GM12878 (cell line): ENCODE measurements at regions of chr2 and their contacts with region 1.

Region 1: DNA sequence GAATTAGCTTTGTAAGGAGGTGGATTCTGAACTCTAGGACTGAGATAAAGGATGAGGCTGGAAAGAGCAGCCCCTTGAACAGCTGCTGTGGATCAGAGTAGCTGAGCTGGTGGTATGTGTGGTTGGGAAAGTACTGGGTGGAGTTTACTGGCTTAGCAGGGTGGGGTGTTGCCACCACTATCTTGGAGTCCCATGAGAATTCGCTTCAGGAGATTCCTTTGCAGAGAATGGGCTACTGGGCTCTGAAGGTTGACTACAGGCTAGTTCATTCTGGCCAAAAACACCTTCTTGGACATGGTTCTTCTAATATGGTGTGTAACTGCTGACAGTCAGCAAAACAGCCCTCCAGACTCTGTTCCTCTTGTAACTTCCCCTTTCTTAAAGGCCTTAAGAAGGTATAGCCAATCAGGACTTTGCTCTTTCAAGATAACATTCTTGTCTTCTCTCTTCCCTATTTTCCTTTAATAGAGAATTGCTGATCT is 52.7 kb downstream of the TET3 start:
- DNase-seq: peak; percentile 54
- ATAC-seq: peak; percentile 81
- H3K4me3 ChIP-seq: peak overlapping the region; percentile 35; the same call in 1 of the 2 replicates
- H3K27ac ChIP-seq: peak overlapping the region; percentile 64
- H3K4me1 ChIP-seq: peaks cover 69% of the 10 kb centered on the region
- H3K27me3 ChIP-seq: no peaks in the 10 kb centered on the region
- CTCF ChIP-seq: no peak
- EP300 ChIP-seq: 0 out of 4 replicates have a peak, but pooled peaks of 1 of the 2 experiments have one; percentile 7
- POLR2A ChIP-seq: no peak
- RAD21 ChIP-seq: no peak

Region 2: DNA sequence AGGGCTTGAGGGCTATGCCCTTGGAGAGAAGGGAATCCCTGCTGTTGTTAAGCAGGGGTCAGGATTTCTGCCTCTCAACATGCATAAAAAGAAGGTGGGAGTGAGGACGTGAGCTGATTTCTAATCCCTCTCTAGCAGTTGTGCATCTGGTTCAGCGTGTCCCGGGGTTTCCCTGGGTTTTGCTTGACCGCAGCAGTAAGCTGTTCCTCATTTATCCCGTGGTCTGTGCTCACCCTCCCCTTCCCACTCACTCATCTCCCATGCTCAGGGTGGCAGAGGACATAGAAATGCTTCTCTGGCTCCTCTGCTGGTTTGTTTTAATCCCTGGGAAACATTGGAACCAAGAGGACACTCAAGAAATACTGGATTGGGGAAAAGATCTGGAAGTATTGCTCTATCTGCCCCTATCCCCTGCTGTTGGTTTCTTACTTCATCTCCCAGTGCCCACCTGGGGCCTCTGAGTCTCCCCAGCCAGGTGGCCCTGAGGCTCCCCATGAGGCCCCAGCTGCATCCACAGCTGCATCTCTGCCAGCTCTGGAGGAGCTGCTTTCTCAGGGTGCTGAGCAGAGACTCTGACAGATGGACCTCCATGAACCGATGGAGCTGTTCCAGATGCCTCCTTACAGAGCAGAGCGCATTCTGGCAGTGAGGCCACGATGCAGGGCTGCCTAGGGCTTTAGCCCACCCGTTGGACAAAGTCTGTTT is 16.6 kb before region 1 on chr2:
- CTCF ChIA-PET with region 1: interaction called, 31 read pairs
- POLR2A ChIA-PET with region 1: interaction called, 68 read pairs
- RAD21 ChIA-PET with region 1: interaction called, 20 read pairs
- SMC1A ChIA-PET with region 1: interaction called, 94 read pairs
- in situ Hi-C with region 1: no loop called
- intact Hi-C with region 1: no loop called
- DNase-seq: no peak
- ATAC-seq: peak; percentile 67
- H3K4me3 ChIP-seq: no peak overlapping the region
- H3K27ac ChIP-seq: peak overlapping the region; percentile 76
- H3K4me1 ChIP-seq: peaks cover 32% of the 10 kb centered on the region
- H3K27me3 ChIP-seq: no peaks in the 10 kb centered on the region
- CTCF ChIP-seq: 0 out of 6 replicates have a peak, but pooled peaks of 1 of the 3 experiments have one; percentile 0
- EP300 ChIP-seq: peak in 1 of 2 experiments; percentile 32; a peak in 1 of 4 replicates
- POLR2A ChIP-seq: no peak
- RAD21 ChIP-seq: no peak

Region 3: DNA sequence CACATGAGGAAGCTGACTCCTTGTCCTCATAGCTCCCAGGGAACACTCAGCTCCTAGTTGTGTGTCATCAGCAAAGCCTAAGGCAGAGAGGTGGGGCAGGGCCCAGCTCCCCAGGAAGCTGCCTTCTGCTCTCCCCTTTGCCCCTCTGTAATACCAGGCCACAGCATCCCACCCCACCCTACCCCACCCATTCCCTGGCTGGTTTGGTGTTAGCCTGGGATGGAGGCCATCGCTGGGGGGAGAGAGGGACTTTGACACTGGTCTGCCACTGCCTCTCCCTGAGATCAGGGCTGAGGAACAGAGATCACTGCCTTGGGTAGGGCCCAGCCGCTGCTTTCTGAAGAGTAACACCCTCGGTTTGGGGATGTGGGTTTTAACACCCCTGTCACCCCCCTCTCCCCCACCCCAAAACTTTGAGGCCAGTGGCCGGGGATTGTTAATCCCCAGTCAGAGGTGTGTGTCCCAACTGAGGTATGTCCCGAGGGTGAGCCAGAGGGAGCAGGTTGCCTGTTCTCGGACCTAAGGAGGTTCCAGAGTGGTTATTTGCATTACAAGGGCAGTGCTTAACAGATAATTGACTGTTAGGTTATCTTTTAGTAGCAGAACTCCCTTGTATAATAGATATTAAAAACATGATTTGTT is 11.3 kb before region 1 on chr2:
- CTCF ChIA-PET with region 1: interaction called, 31 read pairs
- POLR2A ChIA-PET with region 1: interaction called, 68 read pairs
- RAD21 ChIA-PET with region 1: interaction called, 20 read pairs
- SMC1A ChIA-PET with region 1: interaction called, 94 read pairs
- in situ Hi-C with region 1: no loop called
- intact Hi-C with region 1: no loop called
- DNase-seq: no peak
- ATAC-seq: peak; percentile 78
- H3K4me3 ChIP-seq: peak overlapping the region; percentile 38; the same call in 1 of the 2 replicates
- H3K27ac ChIP-seq: peak overlapping the region; percentile 64
- H3K4me1 ChIP-seq: peaks cover 50% of the 10 kb centered on the region
- H3K27me3 ChIP-seq: no peaks in the 10 kb centered on the region
- CTCF ChIP-seq: no peak
- EP300 ChIP-seq: no peak
- POLR2A ChIP-seq: no peak
- RAD21 ChIP-seq: no peak

Region 4: GRCh38 chr2:74052732-74053597 is 15.5 kb after region 1 on chr2:
- CTCF ChIA-PET with region 1: interaction called, 5 read pairs
- POLR2A ChIA-PET with region 1: interaction called, 16 read pairs
- RAD21 ChIA-PET with region 1: interaction called, 3 read pairs
- SMC1A ChIA-PET with region 1: interaction called, 17 read pairs
- in situ Hi-C with region 1: no loop called
- intact Hi-C with region 1: no loop called
- DNase-seq: no peak
- ATAC-seq: peak; percentile 77
- H3K4me3 ChIP-seq: no peak overlapping the region
- H3K27ac ChIP-seq: no peak overlapping the region
- H3K4me1 ChIP-seq: peaks cover 19% of the 10 kb centered on the region
- H3K27me3 ChIP-seq: no peaks in the 10 kb centered on the region
- CTCF ChIP-seq: no peak
- EP300 ChIP-seq: no peak
- POLR2A ChIP-seq: no peak
- RAD21 ChIP-seq: no peak

Region 5: GRCh38 chr2:74080346-74080745 is 42.9 kb after region 1 on chr2:
- CTCF ChIA-PET with region 1: no interaction called
- POLR2A ChIA-PET with region 1: interaction called, 4 read pairs
- RAD21 ChIA-PET with region 1: interaction called, 11 read pairs
- SMC1A ChIA-PET with region 1: interaction called, 16 read pairs
- in situ Hi-C with region 1: no loop called
- intact Hi-C with region 1: no loop called
- DNase-seq: no peak
- ATAC-seq: peak; percentile 39
- H3K4me3 ChIP-seq: no peak overlapping the region
- H3K27ac ChIP-seq: peak overlapping the region; percentile 57
- H3K4me1 ChIP-seq: peaks cover 17% of the 10 kb centered on the region
- H3K27me3 ChIP-seq: no peaks in the 10 kb centered on the region
- CTCF ChIP-seq: peak; percentile 23 to 58 (median 28); a peak in 4 of 6 replicates
- EP300 ChIP-seq: peak in 1 of 2 experiments; percentile 7; a peak in 1 of 4 replicates
- POLR2A ChIP-seq: peak; percentile 30; the same call in 1 of the 2 replicates
- RAD21 ChIP-seq: peak; percentile 78